Calu3 (cell line): ENCODE measurements at regions of chr12 and their contacts with region 1.

Region 1: DNA sequence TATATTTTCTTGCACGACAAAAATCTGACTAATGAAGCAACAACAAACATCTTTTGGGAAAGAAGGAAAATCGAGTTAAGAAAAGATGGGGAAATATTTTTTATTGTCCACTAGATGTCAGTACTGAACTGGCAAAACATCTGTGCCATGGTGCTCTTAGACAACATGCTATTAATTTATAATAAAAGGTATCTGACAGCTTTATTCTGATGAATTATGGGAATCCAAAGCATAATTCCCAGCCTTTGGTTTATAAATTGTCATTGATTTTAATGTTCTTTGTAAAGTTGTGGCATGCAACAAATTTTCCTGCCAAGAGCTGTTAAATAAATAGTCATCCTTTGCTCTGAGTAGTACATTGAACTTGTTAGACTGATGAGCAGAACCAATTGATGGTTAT is 231.2 kb downstream of the ETNK1 start:
- DNase-seq: no peak
- H3K4me3 Mint-ChIP-seq: no peak overlapping the region
- H3K27ac Mint-ChIP-seq: no peak overlapping the region
- H3K4me1 Mint-ChIP-seq: peaks cover 6% of the 10 kb centered on the region
- H3K27me3 Mint-ChIP-seq: peaks cover 48% of the 10 kb centered on the region
- CTCF ChIP-seq: peak; percentile 47

Region 2: GRCh38 chr12:23221066-23221465 is 364.9 kb after region 1 on chr12:
- CTCF ChIA-PET with region 1: interaction called, 8 read pairs
- intact Hi-C with region 1: loop called (anchors 1 kb)
- DNase-seq: peak; percentile 42
- H3K4me3 Mint-ChIP-seq: no peak overlapping the region
- H3K27ac Mint-ChIP-seq: no peak overlapping the region
- H3K4me1 Mint-ChIP-seq: no peaks in the 10 kb centered on the region
- H3K27me3 Mint-ChIP-seq: no peaks in the 10 kb centered on the region
- CTCF ChIP-seq: peak; percentile 29

Region 3: GRCh38 chr12:23277831-23278230 is 421.7 kb after region 1 on chr12:
- CTCF ChIA-PET with region 1: no interaction called
- intact Hi-C with region 1: no loop called
- DNase-seq: no peak
- H3K4me3 Mint-ChIP-seq: no peak overlapping the region
- H3K27ac Mint-ChIP-seq: no peak overlapping the region
- H3K4me1 Mint-ChIP-seq: no peaks in the 10 kb centered on the region
- H3K27me3 Mint-ChIP-seq: no peaks in the 10 kb centered on the region
- CTCF ChIP-seq: no peak